ENCODE measurements at regions of chr5 and their contacts with region 1.

Region 1: GRCh38 chr5:90161414-90161813 is 248.1 kb downstream of the CETN3 start:
- DNase-seq: peak; percentile 59
- H3K4me3 ChIP-seq: no peak overlapping the region
- H3K4me3 Mint-ChIP-seq: no peak overlapping the region
- H3K27ac Mint-ChIP-seq: no peak overlapping the region
- H3K4me1 ChIP-seq: 0 out of 2 replicates have a peak, but pooled peaks cover 5% of the 10 kb centered on the region
- H3K4me1 Mint-ChIP-seq: no peaks in the 10 kb centered on the region
- H3K27me3 ChIP-seq: peaks cover 2% of the 10 kb centered on the region; the same call in 1 of the 2 replicates
- H3K27me3 Mint-ChIP-seq: no peaks in the 10 kb centered on the region
- CTCF ChIP-seq: peak; percentile 18 to 47

Region 2: GRCh38 chr5:89816038-89816437 is 345.4 kb before region 1 on chr5:
- CTCF ChIA-PET with region 1: no interaction called
- POLR2A ChIA-PET with region 1: no interaction called
- intact Hi-C with region 1: loop called (anchors 5 kb)
- DNase-seq: no peak
- H3K4me3 ChIP-seq: no peak overlapping the region
- H3K4me3 Mint-ChIP-seq: no peak overlapping the region
- H3K27ac Mint-ChIP-seq: no peak overlapping the region
- H3K4me1 ChIP-seq: no peaks in the 10 kb centered on the region
- H3K4me1 Mint-ChIP-seq: no peaks in the 10 kb centered on the region
- H3K27me3 ChIP-seq: no peaks in the 10 kb centered on the region
- H3K27me3 Mint-ChIP-seq: no peaks in the 10 kb centered on the region
- CTCF ChIP-seq: no peak

Region 3: DNA sequence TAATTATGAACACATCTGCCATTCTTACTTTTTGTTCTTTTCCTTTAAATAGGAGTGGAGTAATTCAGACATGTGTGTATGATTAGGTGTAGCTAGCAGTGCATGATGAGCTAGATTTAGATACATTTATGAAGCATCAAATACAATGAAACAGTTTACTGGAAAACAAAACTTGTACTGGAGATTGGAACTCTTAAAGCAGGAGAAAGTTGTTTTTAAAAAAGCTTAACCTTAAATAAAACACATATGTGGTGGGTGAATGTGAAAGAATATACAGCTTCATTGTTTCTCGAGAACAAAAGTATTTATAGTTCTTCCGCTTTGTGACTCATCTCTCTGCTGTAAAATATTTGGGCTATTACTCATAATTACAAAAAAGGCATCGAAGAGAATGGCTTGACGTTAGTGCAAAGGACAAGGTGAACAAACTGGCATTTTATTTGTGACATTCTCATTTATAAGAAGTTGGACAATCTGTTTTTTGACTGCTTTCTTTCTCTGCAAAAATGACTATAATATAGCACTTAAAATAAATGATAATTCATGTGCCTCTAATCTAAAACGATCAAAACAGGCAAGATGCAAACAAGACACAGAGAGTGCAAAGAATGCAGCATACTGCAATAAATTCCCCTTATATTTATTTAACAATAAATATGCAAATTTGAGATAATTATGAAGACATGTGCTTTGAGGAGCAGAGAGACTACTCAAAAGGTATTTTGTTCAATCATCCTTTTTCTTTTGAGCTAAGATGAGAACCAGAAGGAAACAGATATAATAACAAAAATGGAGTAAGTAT is 230.6 kb before region 1 on chr5:
- CTCF ChIA-PET with region 1: no interaction called
- POLR2A ChIA-PET with region 1: no interaction called
- intact Hi-C with region 1: loop called (anchors 2 kb)
- DNase-seq: peak in 1 of 2 experiments; percentile 11
- H3K4me3 ChIP-seq: no peak overlapping the region
- H3K4me3 Mint-ChIP-seq: peak overlapping the region; percentile 52
- H3K27ac Mint-ChIP-seq: peak overlapping the region; percentile 58
- H3K4me1 ChIP-seq: peaks cover 24% of the 10 kb centered on the region
- H3K4me1 Mint-ChIP-seq: peaks cover 19% of the 10 kb centered on the region
- H3K27me3 ChIP-seq: no peaks in the 10 kb centered on the region
- H3K27me3 Mint-ChIP-seq: no peaks in the 10 kb centered on the region
- CTCF ChIP-seq: no peak

Measured in Caco-2 (cell line).